ENCODE measurements at regions of chr18 and their contacts with region 1.

Region 1: DNA sequence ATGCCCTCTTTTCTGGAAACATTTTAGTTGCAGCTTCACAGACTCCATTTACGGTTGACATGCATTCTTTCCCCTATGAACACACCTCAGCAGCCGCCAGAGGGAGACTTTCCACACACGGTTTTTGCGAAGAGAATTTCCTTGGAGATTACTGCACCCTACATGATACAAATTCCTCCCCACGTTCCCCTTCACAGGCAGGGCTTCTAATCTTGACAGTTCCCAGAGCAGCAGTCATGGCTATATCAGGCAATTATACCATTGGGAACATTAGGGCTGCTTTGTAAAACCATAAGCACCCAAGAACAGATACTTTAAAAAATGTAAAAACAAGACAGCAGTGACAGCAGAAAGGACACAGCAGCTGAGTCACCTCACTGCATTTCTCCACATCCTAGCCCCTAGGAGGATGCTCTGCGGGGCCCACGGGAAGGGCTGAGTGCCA is 253.8 kb downstream of the TGIF1 start:
- DNase-seq: peak; percentile 73
- ATAC-seq: peak; percentile 92
- H3K4me3 ChIP-seq: no peak overlapping the region
- H3K27ac ChIP-seq: no peak overlapping the region
- H3K4me1 ChIP-seq: peaks cover 12% of the 10 kb centered on the region; the same call in 1 of the 2 replicates
- H3K27me3 ChIP-seq: no peaks in the 10 kb centered on the region; the same call in none of the 2 replicates
- CTCF ChIP-seq: peak; percentile 87
- POLR2A ChIP-seq: no peak
- RAD21 ChIP-seq: peak; percentile 78

Region 2: GRCh38 chr18:3869848-3870247 is 166.1 kb after region 1 on chr18:
- CTCF ChIA-PET with region 1: interaction called, 4 read pairs
- POLR2A ChIA-PET with region 1: no interaction called
- dilution Hi-C with region 1: no loop called
- in situ Hi-C with region 1: loop called (anchors 5 kb)
- intact Hi-C with region 1: loop called (anchors 1 kb)
- DNase-seq: peak; percentile 76
- ATAC-seq: peak; percentile 87
- H3K4me3 ChIP-seq: no peak overlapping the region
- H3K27ac ChIP-seq: no peak overlapping the region
- H3K4me1 ChIP-seq: no peaks in the 10 kb centered on the region
- H3K27me3 ChIP-seq: peaks cover 3% of the 10 kb centered on the region; the same call in 1 of the 2 replicates
- CTCF ChIP-seq: peak; percentile 71
- POLR2A ChIP-seq: no peak
- RAD21 ChIP-seq: peak; percentile 83

Region 3: DNA sequence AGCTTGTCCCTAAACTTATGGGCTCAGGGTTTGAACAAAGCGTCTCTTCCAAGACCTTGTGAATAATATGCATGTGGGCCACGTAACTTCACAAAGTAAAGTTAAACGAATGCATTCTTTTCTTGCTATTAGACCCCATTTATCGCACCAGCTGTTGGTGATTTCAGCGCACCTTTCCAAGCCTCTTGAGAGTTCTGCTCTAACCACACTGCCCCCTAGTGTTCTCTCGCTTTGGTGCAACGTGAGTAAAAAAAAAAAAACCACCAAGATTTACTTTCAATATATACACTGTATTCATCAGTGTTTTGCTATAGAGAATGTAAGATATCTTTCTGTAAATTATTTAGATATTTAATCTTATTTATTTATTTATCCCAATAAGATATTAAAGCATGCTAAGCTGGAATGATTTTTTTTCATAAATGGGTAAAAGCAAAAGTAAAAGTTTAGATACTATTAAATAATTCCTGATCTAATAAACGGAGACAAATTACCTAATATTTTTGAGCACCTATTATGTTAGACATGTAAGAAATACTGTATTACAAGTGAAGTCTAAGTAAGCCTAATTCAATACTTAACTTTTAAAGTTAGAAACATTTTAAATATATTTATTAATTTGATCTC is 291.8 kb after region 1 on chr18:
- CTCF ChIA-PET with region 1: interaction called, 8 read pairs
- POLR2A ChIA-PET with region 1: no interaction called
- dilution Hi-C with region 1: no loop called
- in situ Hi-C with region 1: loop called (anchors 10 kb)
- intact Hi-C with region 1: loop called (anchors 1 kb)
- DNase-seq: peak; percentile 82
- ATAC-seq: peak; percentile 72
- H3K4me3 ChIP-seq: no peak overlapping the region
- H3K27ac ChIP-seq: no peak overlapping the region
- H3K4me1 ChIP-seq: no peaks in the 10 kb centered on the region
- H3K27me3 ChIP-seq: no peaks in the 10 kb centered on the region
- CTCF ChIP-seq: peak; percentile 80
- POLR2A ChIP-seq: no peak
- RAD21 ChIP-seq: peak; percentile 76

Region 4: GRCh38 chr18:4004183-4004829 is 300.6 kb after region 1 on chr18:
- CTCF ChIA-PET with region 1: no interaction called
- POLR2A ChIA-PET with region 1: no interaction called
- dilution Hi-C with region 1: no loop called
- in situ Hi-C with region 1: loop called (anchors 10 kb)
- intact Hi-C with region 1: no loop called
- DNase-seq: peak; percentile 51
- ATAC-seq: peak; percentile 72
- H3K4me3 ChIP-seq: no peak overlapping the region
- H3K27ac ChIP-seq: no peak overlapping the region
- H3K4me1 ChIP-seq: peaks cover 5% of the 10 kb centered on the region
- H3K27me3 ChIP-seq: no peaks in the 10 kb centered on the region
- CTCF ChIP-seq: no peak
- POLR2A ChIP-seq: no peak
- RAD21 ChIP-seq: no peak

Region 5: GRCh38 chr18:4068552-4069158 is 364.9 kb after region 1 on chr18:
- CTCF ChIA-PET with region 1: interaction called, 3 read pairs
- POLR2A ChIA-PET with region 1: no interaction called
- dilution Hi-C with region 1: no loop called
- in situ Hi-C with region 1: no loop called
- intact Hi-C with region 1: loop called (anchors 2 kb)
- DNase-seq: peak; percentile 56
- ATAC-seq: peak; percentile 91
- H3K4me3 ChIP-seq: no peak overlapping the region
- H3K27ac ChIP-seq: no peak overlapping the region
- H3K4me1 ChIP-seq: no peaks in the 10 kb centered on the region
- H3K27me3 ChIP-seq: no peaks in the 10 kb centered on the region
- CTCF ChIP-seq: peak; percentile 61
- POLR2A ChIP-seq: no peak
- RAD21 ChIP-seq: peak; percentile 55

Measured in IMR-90 (cell line).